ENCODE measurements at regions of chr12 and their contacts with region 1.

Region 1: DNA sequence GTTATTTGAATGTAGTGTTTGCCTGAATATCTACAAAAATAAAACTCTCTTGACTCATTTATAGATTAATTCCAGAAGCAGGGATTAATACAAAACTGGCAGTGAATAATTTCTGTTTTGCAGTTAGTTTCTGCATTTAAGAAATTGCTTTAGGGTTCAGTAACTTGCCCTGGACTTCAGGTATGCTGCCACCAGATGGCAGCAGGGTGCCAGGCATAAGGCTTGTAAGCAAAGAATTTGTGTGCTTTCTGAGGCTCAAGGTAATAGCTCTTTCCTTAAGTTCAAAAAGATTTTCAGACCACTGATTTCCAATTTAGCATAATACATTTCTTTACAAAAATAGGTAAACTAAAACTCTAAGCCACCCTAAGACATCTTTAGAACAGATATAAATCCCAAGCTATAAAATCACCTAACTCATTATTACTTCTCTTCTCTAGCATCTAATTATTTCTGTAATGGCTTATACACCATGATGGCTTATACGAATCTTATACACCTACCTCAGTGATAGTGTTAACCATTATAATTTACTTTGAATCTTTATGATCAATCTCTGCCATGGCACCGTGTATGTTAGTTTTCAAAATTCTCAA is 398.3 kb downstream of the APAF1 start:
- DNase-seq: peak; percentile 45
- ATAC-seq: peak; percentile 54; the same call in 1 of the 3 replicates
- H3K4me3 ChIP-seq: no peak overlapping the region
- H3K27ac ChIP-seq: no peak overlapping the region
- H3K4me1 ChIP-seq: no peaks in the 10 kb centered on the region
- H3K27me3 ChIP-seq: peaks cover 0 to 2% of the 10 kb centered on the region in 2 experiments; a peak in 1 of 5 replicates
- CTCF ChIP-seq: peak; percentile 79
- EP300 ChIP-seq: no peak
- POLR2A ChIP-seq: no peak
- RAD21 ChIP-seq: peak; percentile 61

Region 2: DNA sequence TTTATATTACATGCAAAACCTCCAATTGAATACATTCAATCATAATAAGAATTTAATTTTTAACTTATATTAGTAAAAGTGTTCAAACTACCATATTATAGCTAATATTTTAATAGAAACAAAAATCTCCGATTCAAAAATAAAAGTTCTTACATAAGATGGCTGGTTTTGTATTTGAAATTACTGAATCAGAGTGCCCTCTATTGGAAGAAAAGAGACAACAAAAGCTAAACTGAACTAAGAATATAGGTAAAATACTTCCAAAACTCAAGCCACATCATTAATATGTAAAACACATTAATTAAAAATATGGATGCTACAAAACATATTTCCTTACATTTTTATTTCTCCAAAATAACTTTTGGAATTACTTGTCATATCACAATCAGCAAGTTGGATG is 724.4 kb after region 1 on chr12:
- CTCF ChIA-PET with region 1: interaction called, 16 read pairs
- POLR2A ChIA-PET with region 1: no interaction called
- in situ Hi-C with region 1: loop called (anchors 25 kb)
- intact Hi-C with region 1: no loop called
- DNase-seq: no peak
- ATAC-seq: no peak
- H3K4me3 ChIP-seq: no peak overlapping the region
- H3K27ac ChIP-seq: no peak overlapping the region
- H3K4me1 ChIP-seq: no peaks in the 10 kb centered on the region
- H3K27me3 ChIP-seq: no peaks in the 10 kb centered on the region
- CTCF ChIP-seq: peak; percentile 40
- EP300 ChIP-seq: no peak
- POLR2A ChIP-seq: no peak
- RAD21 ChIP-seq: no peak

Measured in HepG2 (cell line).